Colonic mucosa (tissue), 4 donors: ENCODE measurements at regions of chrX and their contacts with region 1.

Region 1: DNA sequence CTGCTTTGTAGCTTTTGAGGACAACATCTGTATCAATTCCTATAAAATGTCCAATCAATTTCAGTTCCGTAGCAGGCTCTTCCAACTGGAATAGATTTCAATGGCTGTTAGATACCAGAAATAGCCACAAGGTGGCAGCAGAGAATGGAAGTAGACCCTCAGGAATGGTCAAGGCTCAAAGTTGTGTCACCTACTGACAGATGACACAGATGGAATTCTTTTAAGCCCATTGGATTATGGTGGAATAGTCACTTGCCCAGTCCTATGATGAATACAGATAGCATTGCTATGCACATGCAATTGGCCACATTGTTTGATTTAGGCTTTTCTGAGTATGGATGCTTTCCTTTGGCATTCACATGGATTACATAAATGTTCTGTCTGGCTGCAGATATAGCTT is 130.4 kb upstream of the RADX start:
- DNase-seq: peak; percentile 72
- H3K4me3 ChIP-seq: no peak overlapping the region
- H3K27ac ChIP-seq: no peak overlapping the region
- H3K4me1 ChIP-seq: no peaks in the 10 kb centered on the region
- H3K27me3 ChIP-seq: no peaks in the 10 kb centered on the region
- CTCF ChIP-seq: peak; percentile 83

Region 2: DNA sequence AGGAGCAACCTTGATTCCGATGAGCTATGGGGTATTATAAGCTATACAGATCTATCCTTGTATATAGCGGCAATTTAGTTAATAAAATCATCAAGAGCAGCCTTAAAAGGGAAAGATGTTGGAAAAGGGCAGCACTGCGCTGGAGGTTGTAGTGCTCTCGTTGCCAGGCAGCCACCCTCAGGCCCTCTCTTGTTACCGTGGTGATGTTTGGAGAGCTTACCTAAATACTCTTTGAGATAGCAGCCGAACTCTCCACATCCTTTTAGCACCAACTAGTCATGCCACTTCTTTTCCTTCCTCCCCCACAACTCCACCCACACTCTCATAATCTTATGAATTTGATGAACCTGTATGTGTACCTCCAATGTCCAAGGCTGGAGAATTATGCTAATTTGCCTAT is 126.7 kb after region 1 on chrX:
- intact Hi-C with region 1: loop called (anchors 10 kb)
- DNase-seq: no peak
- H3K4me3 ChIP-seq: no peak overlapping the region
- H3K27ac ChIP-seq: no peak overlapping the region
- H3K4me1 ChIP-seq: no peaks in the 10 kb centered on the region
- H3K27me3 ChIP-seq: no peaks in the 10 kb centered on the region
- CTCF ChIP-seq: no peak

Region 3: DNA sequence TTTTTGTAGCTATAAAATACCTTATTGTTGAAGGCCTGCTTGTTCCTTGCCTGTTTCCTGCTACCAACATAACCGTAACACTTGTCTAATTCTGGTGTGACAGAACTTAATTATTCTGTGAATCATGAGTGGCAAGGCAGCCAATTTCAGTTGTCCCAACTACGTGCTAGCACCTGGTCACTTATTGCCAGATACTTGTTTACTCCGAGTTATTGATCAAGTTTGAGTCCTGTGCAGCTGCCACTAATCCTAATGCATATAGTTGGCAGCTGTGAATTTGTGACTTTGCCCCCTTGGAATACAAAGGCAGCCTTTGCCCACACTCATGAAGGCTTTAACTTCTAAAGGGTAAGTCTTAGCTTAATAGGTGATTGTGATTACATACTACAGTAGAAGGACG is 237.4 kb after region 1 on chrX:
- intact Hi-C with region 1: no loop called
- DNase-seq: no peak
- H3K4me3 ChIP-seq: no peak overlapping the region
- H3K27ac ChIP-seq: no peak overlapping the region
- H3K4me1 ChIP-seq: no peaks in the 10 kb centered on the region
- H3K27me3 ChIP-seq: no peaks in the 10 kb centered on the region
- CTCF ChIP-seq: no peak

Region 4: GRCh38 chrX:106791495-106791894 is 310.2 kb after region 1 on chrX:
- intact Hi-C with region 1: loop called (anchors 10 kb)
- DNase-seq: no peak
- H3K4me3 ChIP-seq: no peak overlapping the region
- H3K27ac ChIP-seq: no peak overlapping the region
- H3K4me1 ChIP-seq: no peaks in the 10 kb centered on the region
- H3K27me3 ChIP-seq: no peaks in the 10 kb centered on the region
- CTCF ChIP-seq: no peak